T-cell (primary cell): ENCODE measurements at regions of chr3 and their contacts with region 1.

Region 1: DNA sequence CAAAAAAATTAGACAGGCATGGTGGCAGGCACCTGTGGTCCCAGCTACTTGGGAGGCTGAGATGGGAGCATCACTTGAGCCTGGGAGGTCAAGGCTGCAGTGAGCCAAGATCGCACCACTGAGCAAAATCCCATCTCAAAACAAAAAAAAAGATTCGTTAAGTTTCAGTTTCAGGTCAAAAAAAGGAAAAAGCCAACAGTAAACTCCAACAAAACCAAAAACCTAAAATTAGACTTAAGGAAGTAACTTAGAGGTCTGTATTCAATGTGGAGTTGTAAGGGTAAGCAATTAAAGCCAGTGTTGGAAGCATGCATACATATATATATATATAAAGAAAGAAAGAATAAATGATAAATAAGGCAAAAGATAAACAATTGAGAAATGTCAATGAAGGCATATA is 11.8 kb downstream of the KPNA1 start:
- DNase-seq: no peak
- ATAC-seq: no peak
- H3K4me3 ChIP-seq: no peak overlapping the region
- H3K4me3 Mint-ChIP-seq: no peak overlapping the region
- H3K27ac ChIP-seq: no peak overlapping the region
- H3K27ac Mint-ChIP-seq: no peak overlapping the region
- H3K4me1 ChIP-seq: no peaks in the 10 kb centered on the region
- H3K4me1 Mint-ChIP-seq: peaks cover 75 to 78% (median 75%) of the 10 kb centered on the region in 3 donors
- H3K27me3 ChIP-seq: no peaks in the 10 kb centered on the region
- H3K27me3 Mint-ChIP-seq: no peaks in the 10 kb centered on the region

Region 2: DNA sequence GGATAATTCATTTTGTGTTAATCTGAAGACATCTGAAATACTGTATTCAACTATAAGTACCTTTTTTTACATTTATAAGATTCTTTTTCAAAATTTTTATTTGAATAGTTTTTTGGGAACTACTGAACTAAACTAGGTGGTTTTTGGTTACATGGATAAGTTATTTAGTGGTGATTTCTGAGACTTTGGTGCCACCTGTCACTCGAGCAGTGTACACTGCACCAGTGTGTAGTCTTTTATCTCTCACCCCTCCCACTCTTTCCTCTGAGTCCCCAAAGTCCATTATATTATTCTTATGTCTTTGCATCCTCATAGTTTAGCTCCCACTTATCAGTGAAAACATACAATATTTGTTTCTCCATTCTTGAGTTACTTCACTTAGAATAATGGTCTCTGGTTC is 390.2 kb before region 1 on chr3:
- CTCF ChIA-PET with region 1: no interaction called
- POLR2A ChIA-PET with region 1: no interaction called
- DNase-seq: no peak
- ATAC-seq: no peak
- H3K4me3 ChIP-seq: no peak overlapping the region
- H3K4me3 Mint-ChIP-seq: no peak overlapping the region
- H3K27ac ChIP-seq: no peak overlapping the region
- H3K27ac Mint-ChIP-seq: no peak overlapping the region
- H3K4me1 ChIP-seq: no peaks in the 10 kb centered on the region
- H3K4me1 Mint-ChIP-seq: no peaks in the 10 kb centered on the region
- H3K27me3 ChIP-seq: peaks cover 0 to 3% of the 10 kb centered on the region in 2 experiments
- H3K27me3 Mint-ChIP-seq: peaks cover 6 to 13% of the 10 kb centered on the region in 2 donors

Region 3: GRCh38 chr3:122464659-122465058 is 38.3 kb before region 1 on chr3:
- CTCF ChIA-PET with region 1: no interaction called
- POLR2A ChIA-PET with region 1: interaction called in 1 of 2 experiments, 11 read pairs
- DNase-seq: no peak
- ATAC-seq: no peak
- H3K4me3 ChIP-seq: no peak overlapping the region
- H3K4me3 Mint-ChIP-seq: no peak overlapping the region
- H3K27ac ChIP-seq: no peak overlapping the region
- H3K27ac Mint-ChIP-seq: no peak overlapping the region
- H3K4me1 ChIP-seq: peaks cover 2 to 9% of the 10 kb centered on the region in 2 experiments
- H3K4me1 Mint-ChIP-seq: peaks cover 16 to 26% (median 22%) of the 10 kb centered on the region in 3 donors
- H3K27me3 ChIP-seq: no peaks in the 10 kb centered on the region
- H3K27me3 Mint-ChIP-seq: no peaks in the 10 kb centered on the region

Region 4: GRCh38 chr3:122572940-122573412 is 70.0 kb after region 1 on chr3:
- CTCF ChIA-PET with region 1: no interaction called
- POLR2A ChIA-PET with region 1: no interaction called
- DNase-seq: peak in 18 of 35 experiments; percentile 3 to 45 (median 14)
- ATAC-seq: peak in 3 of 4 experiments; percentile 51 to 61 (median 55)
- H3K4me3 ChIP-seq: no peak overlapping the region
- H3K4me3 Mint-ChIP-seq: no peak overlapping the region
- H3K27ac ChIP-seq: peak overlapping the region; percentile 65
- H3K27ac Mint-ChIP-seq: peak overlapping the region; percentile 89 to 90
- H3K4me1 ChIP-seq: peaks cover 21 to 22% of the 10 kb centered on the region in 2 experiments
- H3K4me1 Mint-ChIP-seq: peaks cover 59 to 80% (median 62%) of the 10 kb centered on the region in 3 donors
- H3K27me3 ChIP-seq: no peaks in the 10 kb centered on the region
- H3K27me3 Mint-ChIP-seq: no peaks in the 10 kb centered on the region